ENCODE measurements at regions of chr1 and their contacts with region 1.

Region 1: GRCh38 chr1:23634842-23635651 is 56.6 kb upstream of the RPL11 start:
- DNase-seq: peak; percentile 70 to 79 (median 76)
- H3K4me3 ChIP-seq: peak overlapping the region; percentile 36 to 44
- H3K4me3 Mint-ChIP-seq: peak overlapping the region; percentile 72 to 84 (median 78)
- H3K27ac ChIP-seq: peak overlapping the region; percentile 48
- H3K27ac Mint-ChIP-seq: peak overlapping the region; percentile 71 to 97 (median 90)
- H3K4me1 ChIP-seq: peaks cover 19% of the 10 kb centered on the region
- H3K4me1 Mint-ChIP-seq: peaks cover 21 to 41% (median 26%) of the 10 kb centered on the region in 4 donors
- H3K27me3 ChIP-seq: no peaks in the 10 kb centered on the region
- H3K27me3 Mint-ChIP-seq: no peaks in the 10 kb centered on the region

Region 2: GRCh38 chr1:23524716-23525401 is 110.2 kb before region 1 on chr1:
- CTCF ChIA-PET with region 1: interaction called, 19 read pairs
- POLR2A ChIA-PET with region 1: interaction called, 12 read pairs
- intact Hi-C with region 1: no loop called
- DNase-seq: peak; percentile 26 to 59 (median 36)
- H3K4me3 ChIP-seq: peak overlapping the region; percentile 5 to 44
- H3K4me3 Mint-ChIP-seq: peak overlapping the region; percentile 59 to 93 (median 74)
- H3K27ac ChIP-seq: peak overlapping the region; percentile 60
- H3K27ac Mint-ChIP-seq: peak overlapping the region; percentile 82 to 97 (median 93)
- H3K4me1 ChIP-seq: peaks cover 69% of the 10 kb centered on the region
- H3K4me1 Mint-ChIP-seq: peaks cover 52 to 83% (median 75%) of the 10 kb centered on the region in 4 donors
- H3K27me3 ChIP-seq: no peaks in the 10 kb centered on the region
- H3K27me3 Mint-ChIP-seq: no peaks in the 10 kb centered on the region

Region 3: GRCh38 chr1:23539698-23540266 is 95.3 kb before region 1 on chr1:
- CTCF ChIA-PET with region 1: interaction called, 1,081 read pairs
- POLR2A ChIA-PET with region 1: interaction called, 616 read pairs
- intact Hi-C with region 1: loop called (anchors 1 kb)
- DNase-seq: peak; percentile 91 to 95 (median 92)
- H3K4me3 ChIP-seq: no peak overlapping the region
- H3K4me3 Mint-ChIP-seq: peak overlapping the region in 7 of 8 donors; percentile 23 to 73 (median 52)
- H3K27ac ChIP-seq: no peak overlapping the region
- H3K27ac Mint-ChIP-seq: peak overlapping the region; percentile 68 to 92 (median 89)
- H3K4me1 ChIP-seq: peaks cover 22% of the 10 kb centered on the region
- H3K4me1 Mint-ChIP-seq: peaks cover 12 to 32% (median 23%) of the 10 kb centered on the region in 4 donors
- H3K27me3 ChIP-seq: no peaks in the 10 kb centered on the region
- H3K27me3 Mint-ChIP-seq: no peaks in the 10 kb centered on the region

Region 4: GRCh38 chr1:23591460-23592208 is 43.4 kb before region 1 on chr1:
- CTCF ChIA-PET with region 1: interaction called, 28 read pairs
- POLR2A ChIA-PET with region 1: interaction called, 18 read pairs
- intact Hi-C with region 1: no loop called
- DNase-seq: no peak
- H3K4me3 ChIP-seq: no peak overlapping the region
- H3K4me3 Mint-ChIP-seq: peak overlapping the region in 6 of 8 donors; percentile 25 to 75 (median 64)
- H3K27ac ChIP-seq: no peak overlapping the region
- H3K27ac Mint-ChIP-seq: peak overlapping the region in 6 of 7 donors; percentile 82 to 90 (median 88)
- H3K4me1 ChIP-seq: peaks cover 54% of the 10 kb centered on the region
- H3K4me1 Mint-ChIP-seq: peaks cover 25 to 71% (median 52%) of the 10 kb centered on the region in 4 donors
- H3K27me3 ChIP-seq: no peaks in the 10 kb centered on the region
- H3K27me3 Mint-ChIP-seq: no peaks in the 10 kb centered on the region

Region 5: DNA sequence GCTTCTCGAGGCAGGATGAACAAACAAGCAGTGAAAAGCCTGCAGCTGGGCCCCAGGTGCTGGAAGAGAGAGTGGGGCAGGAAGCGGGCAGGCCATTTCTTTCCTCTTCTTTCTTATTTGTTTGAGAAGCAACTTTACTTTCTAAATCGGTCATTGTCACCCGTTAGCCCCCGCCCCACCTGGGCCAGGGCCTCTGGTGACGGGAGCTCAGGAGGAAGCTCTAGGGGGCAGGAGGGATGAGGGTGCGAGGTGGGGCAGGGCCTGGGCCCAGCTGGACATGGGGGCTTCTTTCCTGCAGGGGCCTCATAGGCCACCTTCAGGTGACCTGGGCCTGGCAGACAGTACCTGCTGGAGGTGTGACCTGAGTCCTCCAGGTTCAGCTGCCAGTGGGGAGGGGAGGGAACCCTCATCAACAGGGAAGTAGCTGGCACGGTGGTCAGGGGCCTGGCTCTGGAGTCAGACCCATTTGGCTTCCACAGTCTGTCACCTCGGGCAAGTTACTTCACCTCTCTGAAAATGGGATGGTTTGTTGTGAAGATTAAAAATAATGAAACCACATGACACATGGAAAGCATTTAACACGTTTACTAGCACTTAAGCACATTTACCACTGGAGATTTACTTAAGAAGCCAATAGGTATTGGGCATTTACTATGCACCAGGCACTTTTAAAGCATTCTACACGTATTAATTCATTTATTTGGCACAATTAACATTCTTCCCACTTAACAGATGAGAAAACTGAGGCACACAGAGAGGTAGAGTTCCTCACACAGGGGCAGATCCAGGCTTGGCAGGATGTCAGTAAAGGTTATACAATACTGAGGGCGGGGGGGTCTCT is 21.6 kb before region 1 on chr1:
- CTCF ChIA-PET with region 1: interaction called, 130 read pairs
- POLR2A ChIA-PET with region 1: interaction called, 154 read pairs
- intact Hi-C with region 1: no loop called
- DNase-seq: peak; percentile 44 to 67 (median 62)
- H3K4me3 ChIP-seq: peak overlapping the region in 1 of 2 donors; percentile 23
- H3K4me3 Mint-ChIP-seq: peak overlapping the region; percentile 60 to 79 (median 71)
- H3K27ac ChIP-seq: peak overlapping the region; percentile 62
- H3K27ac Mint-ChIP-seq: peak overlapping the region; percentile 83 to 94 (median 92)
- H3K4me1 ChIP-seq: peaks cover 83% of the 10 kb centered on the region
- H3K4me1 Mint-ChIP-seq: peaks cover 57 to 88% (median 75%) of the 10 kb centered on the region in 4 donors
- H3K27me3 ChIP-seq: no peaks in the 10 kb centered on the region
- H3K27me3 Mint-ChIP-seq: no peaks in the 10 kb centered on the region